ENCODE measurements at regions of chr11 and their contacts with region 1.

Region 1: DNA sequence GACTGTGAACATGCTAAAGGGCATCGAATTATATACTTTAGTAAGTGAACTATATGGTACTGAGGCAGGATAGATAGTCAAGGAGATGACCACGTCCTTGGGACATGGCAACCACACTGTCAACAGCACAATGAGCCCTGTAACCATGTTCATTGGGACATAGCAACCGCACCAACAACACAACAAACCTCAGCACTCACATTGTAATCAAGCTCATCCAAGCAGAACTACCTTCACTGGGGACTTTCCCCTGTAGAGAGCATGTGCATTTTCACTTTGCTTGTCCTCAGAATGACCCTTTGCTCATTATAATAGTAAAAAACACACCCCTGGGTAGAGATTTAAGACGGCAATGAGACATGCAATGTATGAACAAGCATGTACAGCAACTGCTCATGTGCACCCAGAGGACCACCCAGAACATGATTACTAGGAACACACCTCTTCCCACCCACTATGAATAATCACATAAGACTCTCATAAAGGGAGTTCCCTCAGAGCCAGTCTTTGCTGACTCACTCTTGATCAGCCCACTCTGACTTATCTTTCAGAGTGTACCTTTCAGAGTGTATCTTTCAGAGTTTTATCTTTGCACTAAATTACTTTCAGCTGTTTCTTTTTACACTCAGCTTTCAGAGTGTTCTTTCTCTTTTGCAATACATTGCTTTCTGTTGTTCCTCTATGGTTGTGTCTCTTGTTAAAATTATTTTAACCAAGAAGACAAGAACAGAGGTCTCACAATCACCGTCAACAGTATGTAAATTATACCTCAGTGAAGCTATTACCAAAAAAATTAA is 4.1 kb upstream of the PLAAT2 start:
- DNase-seq: peak in 12 of 14 experiments; percentile 29 to 95 (median 49)
- ATAC-seq: peak; percentile 84
- H3K4me3 ChIP-seq: no peak overlapping the region
- H3K4me3 Mint-ChIP-seq: peak overlapping the region; percentile 22
- H3K27ac ChIP-seq: peak overlapping the region; percentile 67 to 82
- H3K27ac Mint-ChIP-seq: peak overlapping the region; percentile 91
- H3K4me1 ChIP-seq: peaks cover 37% of the 10 kb centered on the region
- H3K4me1 Mint-ChIP-seq: peaks cover 46% of the 10 kb centered on the region
- H3K27me3 ChIP-seq: no peaks in the 10 kb centered on the region
- H3K27me3 Mint-ChIP-seq: no peaks in the 10 kb centered on the region
- CTCF ChIP-seq: no peak

Region 2: DNA sequence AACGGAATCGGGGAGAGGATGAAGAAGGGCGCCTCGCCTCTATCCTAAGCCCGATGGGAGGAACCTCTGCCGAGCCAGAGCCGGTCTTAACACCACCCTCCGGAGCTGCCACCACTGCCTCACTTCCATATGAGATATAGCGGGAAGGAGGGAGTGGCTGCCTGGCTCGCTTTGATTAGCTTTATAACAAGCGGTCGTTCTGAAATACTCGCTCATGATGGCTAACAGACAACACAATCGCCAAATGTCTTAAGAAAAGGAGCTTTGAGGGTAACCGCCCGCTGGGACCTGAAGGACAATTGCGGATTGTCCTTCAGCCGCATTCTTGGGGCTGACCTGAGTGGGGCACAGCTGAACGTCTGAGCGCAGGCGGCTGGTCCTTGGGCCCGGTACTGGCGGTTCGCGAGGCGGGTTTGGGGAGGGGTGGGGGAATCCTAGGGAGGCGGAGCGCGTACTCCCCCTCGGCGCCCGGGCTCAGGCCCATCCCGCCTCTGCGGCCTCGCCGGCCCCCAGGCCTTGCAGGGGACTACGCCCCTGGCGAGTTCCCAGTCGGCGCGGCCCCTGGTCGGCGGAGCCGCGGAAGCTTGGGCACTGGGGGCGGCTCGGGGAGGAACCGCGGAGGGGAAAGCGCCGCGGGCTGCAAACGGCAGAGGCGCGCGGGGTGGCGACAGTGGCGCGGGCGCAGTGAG is 76.5 kb before region 1 on chr11 and contains the start of gene PLAAT5:
- CTCF ChIA-PET with region 1: no interaction called
- POLR2A ChIA-PET with region 1: no interaction called
- intact Hi-C with region 1: loop called in 1 of 2 experiments (anchors 5 kb)
- DNase-seq: peak in 7 of 14 experiments; percentile 10 to 41 (median 17)
- ATAC-seq: peak; percentile 26
- H3K4me3 ChIP-seq: peak within 1 kb of the TSS; percentile 43
- H3K4me3 Mint-ChIP-seq: peak within 1 kb of the TSS; percentile 80
- H3K27ac ChIP-seq: no peak within 1 kb of the TSS
- H3K27ac Mint-ChIP-seq: peak within 1 kb of the TSS; percentile 31
- H3K4me1 ChIP-seq: peaks cover 14% of the 10 kb centered on the region
- H3K4me1 Mint-ChIP-seq: peaks cover 16% of the 10 kb centered on the region
- H3K27me3 ChIP-seq: peaks cover 4 to 5% of the 10 kb centered on the region in 2 experiments
- H3K27me3 Mint-ChIP-seq: peaks cover 34% of the 10 kb centered on the region
- CTCF ChIP-seq: no peak
- total RNA-seq, gene PLAAT5: 0.16 TPM in 1 of 2 experiments, not detected in the other

Region 3: GRCh38 chr11:63553741-63554151 is 13.5 kb before region 1 on chr11:
- CTCF ChIA-PET with region 1: no interaction called
- POLR2A ChIA-PET with region 1: interaction called, 16 read pairs
- intact Hi-C with region 1: loop called in 1 of 2 experiments (anchors 1 kb)
- DNase-seq: peak in 13 of 14 experiments; percentile 40 to 82 (median 62)
- ATAC-seq: peak; percentile 80
- H3K4me3 ChIP-seq: peak overlapping the region; percentile 15
- H3K4me3 Mint-ChIP-seq: peak overlapping the region; percentile 90
- H3K27ac ChIP-seq: peak overlapping the region; percentile 48 to 63
- H3K27ac Mint-ChIP-seq: peak overlapping the region; percentile 89
- H3K4me1 ChIP-seq: peaks cover 47% of the 10 kb centered on the region
- H3K4me1 Mint-ChIP-seq: peaks cover 71% of the 10 kb centered on the region
- H3K27me3 ChIP-seq: no peaks in the 10 kb centered on the region
- H3K27me3 Mint-ChIP-seq: no peaks in the 10 kb centered on the region
- CTCF ChIP-seq: no peak

Region 4: GRCh38 chr11:63614136-63614664 is 47.0 kb after region 1 on chr11 and contains the start of gene PLAAT3:
- CTCF ChIA-PET with region 1: no interaction called
- POLR2A ChIA-PET with region 1: interaction called, 3 read pairs
- intact Hi-C with region 1: loop called in 1 of 2 experiments (anchors 5 kb)
- DNase-seq: peak in 10 of 14 experiments; percentile 8 to 52 (median 26)
- ATAC-seq: peak; percentile 60
- H3K4me3 ChIP-seq: peak within 1 kb of the TSS; percentile 81
- H3K4me3 Mint-ChIP-seq: peak within 1 kb of the TSS; percentile 89
- H3K27ac ChIP-seq: no peak within 1 kb of the TSS
- H3K27ac Mint-ChIP-seq: peak within 1 kb of the TSS; percentile 74
- H3K4me1 ChIP-seq: peaks cover 16% of the 10 kb centered on the region
- H3K4me1 Mint-ChIP-seq: peaks cover 25% of the 10 kb centered on the region
- H3K27me3 ChIP-seq: peaks cover 0 to 3% of the 10 kb centered on the region in 2 experiments
- H3K27me3 Mint-ChIP-seq: no peaks in the 10 kb centered on the region
- CTCF ChIP-seq: no peak
- total RNA-seq, gene PLAAT3: 2.4 to 3.6 TPM

Measured in CD4-positive, alpha-beta T cell (primary cell).